ENCODE measurements at regions of chr3 and their contacts with region 1.

Region 1: GRCh38 chr3:185942907-185943759 is 5.3 kb upstream of the TRA2B start:
- DNase-seq: peak; percentile 76 to 93 (median 80)
- ATAC-seq: peak; percentile 100
- H3K4me3 ChIP-seq: peak overlapping the region; percentile 19
- H3K4me3 Mint-ChIP-seq: peak overlapping the region; percentile 52
- H3K27ac ChIP-seq: no peak overlapping the region
- H3K27ac Mint-ChIP-seq: peak overlapping the region; percentile 70
- H3K4me1 ChIP-seq: peaks cover 15% of the 10 kb centered on the region
- H3K4me1 Mint-ChIP-seq: peaks cover 23% of the 10 kb centered on the region
- H3K27me3 ChIP-seq: no peaks in the 10 kb centered on the region
- H3K27me3 Mint-ChIP-seq: no peaks in the 10 kb centered on the region
- CTCF ChIP-seq: peak; percentile 98

Region 2: DNA sequence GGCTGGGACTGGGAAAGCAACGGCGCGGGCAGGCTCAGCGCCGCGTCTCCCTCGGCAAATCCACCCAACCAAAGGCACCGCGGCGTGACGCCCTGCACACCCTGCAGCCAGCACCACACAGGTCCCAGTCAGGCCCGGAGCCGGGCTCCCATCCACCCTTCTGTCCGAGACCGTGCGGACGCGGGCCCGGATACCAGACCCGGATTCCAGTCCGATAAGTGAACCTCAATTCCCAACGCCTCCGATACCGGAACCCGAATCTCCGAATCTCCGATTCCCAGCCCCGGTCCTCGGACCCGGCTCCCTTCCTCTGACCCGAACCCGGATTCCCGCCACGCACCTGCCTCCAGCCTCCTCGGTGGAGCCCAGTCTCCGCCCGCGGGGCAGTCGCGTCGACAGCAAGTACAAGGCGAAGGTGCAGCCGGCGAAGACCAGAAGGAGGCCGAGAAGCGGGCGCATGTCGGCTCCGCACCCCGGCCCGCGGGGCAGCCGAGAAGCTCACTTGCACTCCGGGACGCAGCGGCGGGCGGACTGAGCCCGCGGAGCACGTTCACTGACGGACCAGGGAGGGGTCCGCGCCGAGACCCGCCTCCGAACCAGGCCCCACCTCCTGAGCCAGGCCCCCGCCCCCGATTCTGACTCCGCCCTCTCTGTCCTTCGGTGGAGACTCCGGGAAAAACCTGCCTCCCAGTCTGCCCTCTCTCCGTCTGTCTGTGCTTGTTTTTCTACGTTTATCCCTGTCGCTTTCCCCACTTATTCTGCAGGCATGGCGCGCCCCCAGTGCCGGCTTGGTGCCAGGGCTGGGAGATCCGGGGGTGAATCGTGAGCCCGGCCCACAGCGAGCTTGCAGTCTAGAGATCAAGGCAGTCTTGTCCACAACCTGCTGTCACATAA is 444.4 kb before region 1 on chr3 and contains the start of gene TMEM41A:
- CTCF ChIA-PET with region 1: no interaction called
- POLR2A ChIA-PET with region 1: no interaction called
- intact Hi-C with region 1: loop called in 1 of 2 experiments (anchors 5 kb)
- DNase-seq: peak; percentile 80 to 91 (median 86)
- ATAC-seq: peak; percentile 98
- H3K4me3 ChIP-seq: peak within 1 kb of the TSS; percentile 97
- H3K4me3 Mint-ChIP-seq: peak within 1 kb of the TSS; percentile 97
- H3K27ac ChIP-seq: peak within 1 kb of the TSS; percentile 24 to 69
- H3K27ac Mint-ChIP-seq: peak within 1 kb of the TSS; percentile 87
- H3K4me1 ChIP-seq: peaks cover 22% of the 10 kb centered on the region
- H3K4me1 Mint-ChIP-seq: peaks cover 24% of the 10 kb centered on the region
- H3K27me3 ChIP-seq: no peaks in the 10 kb centered on the region
- H3K27me3 Mint-ChIP-seq: no peaks in the 10 kb centered on the region
- CTCF ChIP-seq: no peak
- total RNA-seq, gene TMEM41A: 26.8 to 29.1 TPM

Region 3: DNA sequence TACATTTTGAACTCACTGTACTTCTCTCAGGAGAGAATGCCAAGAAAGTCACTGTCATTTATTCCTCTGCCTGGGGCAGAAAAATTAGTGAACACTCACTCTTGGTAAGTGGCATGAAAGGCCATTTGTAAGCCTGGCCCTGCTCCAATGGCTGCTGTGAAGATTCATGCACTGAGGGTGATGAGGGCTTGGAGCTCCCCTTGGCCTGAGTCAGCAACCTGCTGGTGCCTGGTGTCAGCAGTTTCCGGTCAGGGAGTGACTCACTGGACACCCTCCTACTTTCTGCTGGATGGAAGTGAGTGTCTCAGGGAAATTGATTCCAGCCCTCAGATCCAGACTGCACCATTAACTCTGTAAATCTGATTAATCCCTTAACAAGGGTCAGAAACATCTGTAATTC is 42.9 kb before region 1 on chr3:
- CTCF ChIA-PET with region 1: no interaction called
- POLR2A ChIA-PET with region 1: no interaction called
- intact Hi-C with region 1: no loop called
- DNase-seq: peak in 1 of 14 experiments; percentile 54
- ATAC-seq: no peak
- H3K4me3 ChIP-seq: no peak overlapping the region
- H3K4me3 Mint-ChIP-seq: no peak overlapping the region
- H3K27ac ChIP-seq: no peak overlapping the region
- H3K27ac Mint-ChIP-seq: no peak overlapping the region
- H3K4me1 ChIP-seq: no peaks in the 10 kb centered on the region
- H3K4me1 Mint-ChIP-seq: no peaks in the 10 kb centered on the region
- H3K27me3 ChIP-seq: peaks cover 0 to 2% of the 10 kb centered on the region in 2 experiments
- H3K27me3 Mint-ChIP-seq: peaks cover 5% of the 10 kb centered on the region
- CTCF ChIP-seq: no peak

Region 4: GRCh38 chr3:185924375-185924774 is 18.8 kb before region 1 on chr3:
- CTCF ChIA-PET with region 1: interaction called, 24 read pairs
- POLR2A ChIA-PET with region 1: interaction called, 116 read pairs
- intact Hi-C with region 1: loop called in 1 of 2 experiments (anchors 1 kb)
- DNase-seq: no peak
- ATAC-seq: no peak
- H3K4me3 ChIP-seq: no peak overlapping the region
- H3K4me3 Mint-ChIP-seq: no peak overlapping the region
- H3K27ac ChIP-seq: no peak overlapping the region
- H3K27ac Mint-ChIP-seq: peak overlapping the region; percentile 56
- H3K4me1 ChIP-seq: peaks cover 26% of the 10 kb centered on the region
- H3K4me1 Mint-ChIP-seq: peaks cover 63% of the 10 kb centered on the region
- H3K27me3 ChIP-seq: no peaks in the 10 kb centered on the region
- H3K27me3 Mint-ChIP-seq: no peaks in the 10 kb centered on the region
- CTCF ChIP-seq: no peak

Region 5: GRCh38 chr3:185954366-185954723 is 11.2 kb after region 1 on chr3:
- CTCF ChIA-PET with region 1: interaction called, 20 read pairs
- POLR2A ChIA-PET with region 1: interaction called, 23 read pairs
- intact Hi-C with region 1: no loop called
- DNase-seq: no peak
- ATAC-seq: no peak
- H3K4me3 ChIP-seq: no peak overlapping the region
- H3K4me3 Mint-ChIP-seq: no peak overlapping the region
- H3K27ac ChIP-seq: no peak overlapping the region
- H3K27ac Mint-ChIP-seq: no peak overlapping the region
- H3K4me1 ChIP-seq: peaks cover 4% of the 10 kb centered on the region
- H3K4me1 Mint-ChIP-seq: no peaks in the 10 kb centered on the region
- H3K27me3 ChIP-seq: no peaks in the 10 kb centered on the region
- H3K27me3 Mint-ChIP-seq: peaks cover 7% of the 10 kb centered on the region
- CTCF ChIP-seq: no peak

Region 6: DNA sequence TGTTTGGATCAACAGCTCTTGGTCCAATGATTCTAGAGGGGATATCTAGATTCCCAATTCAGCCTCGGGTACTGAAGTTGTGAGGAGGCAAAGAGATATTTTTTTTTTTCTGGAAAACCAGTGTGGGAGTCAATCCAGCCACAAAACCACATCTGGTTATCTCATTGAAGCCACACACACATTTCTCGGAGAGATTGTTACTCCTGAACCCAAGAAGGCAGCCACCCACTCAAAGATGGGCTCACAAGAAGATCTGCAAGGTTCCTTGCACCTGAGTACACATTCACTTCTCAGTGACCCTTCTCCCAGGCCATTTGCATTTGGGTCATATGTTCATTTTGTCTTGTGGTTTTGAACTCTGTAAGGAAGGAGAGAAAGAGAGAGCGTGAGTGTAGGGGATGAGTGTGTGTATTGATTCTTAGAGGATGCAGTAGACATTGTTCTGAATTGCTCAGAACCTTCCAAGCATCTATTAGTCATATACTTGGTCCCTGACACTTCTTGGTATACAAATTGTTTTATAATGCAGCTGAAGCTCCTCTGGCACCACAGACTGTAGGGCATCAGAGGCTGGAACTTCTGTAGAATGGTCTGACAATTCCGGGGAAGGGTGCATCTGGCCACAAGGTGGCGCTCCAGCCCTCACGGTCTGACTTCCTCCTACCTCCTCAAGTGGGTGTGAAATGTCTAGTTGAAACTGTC is 34.0 kb after region 1 on chr3:
- CTCF ChIA-PET with region 1: interaction called, 10 read pairs
- POLR2A ChIA-PET with region 1: no interaction called
- intact Hi-C with region 1: loop called in 1 of 2 experiments (anchors 5 kb)
- DNase-seq: peak; percentile 59 to 88 (median 76)
- ATAC-seq: peak; percentile 87
- H3K4me3 ChIP-seq: no peak overlapping the region
- H3K4me3 Mint-ChIP-seq: no peak overlapping the region
- H3K27ac ChIP-seq: no peak overlapping the region
- H3K27ac Mint-ChIP-seq: no peak overlapping the region
- H3K4me1 ChIP-seq: no peaks in the 10 kb centered on the region
- H3K4me1 Mint-ChIP-seq: peaks cover 8% of the 10 kb centered on the region
- H3K27me3 ChIP-seq: no peaks in the 10 kb centered on the region
- H3K27me3 Mint-ChIP-seq: no peaks in the 10 kb centered on the region
- CTCF ChIP-seq: peak; percentile 95

Region 7: DNA sequence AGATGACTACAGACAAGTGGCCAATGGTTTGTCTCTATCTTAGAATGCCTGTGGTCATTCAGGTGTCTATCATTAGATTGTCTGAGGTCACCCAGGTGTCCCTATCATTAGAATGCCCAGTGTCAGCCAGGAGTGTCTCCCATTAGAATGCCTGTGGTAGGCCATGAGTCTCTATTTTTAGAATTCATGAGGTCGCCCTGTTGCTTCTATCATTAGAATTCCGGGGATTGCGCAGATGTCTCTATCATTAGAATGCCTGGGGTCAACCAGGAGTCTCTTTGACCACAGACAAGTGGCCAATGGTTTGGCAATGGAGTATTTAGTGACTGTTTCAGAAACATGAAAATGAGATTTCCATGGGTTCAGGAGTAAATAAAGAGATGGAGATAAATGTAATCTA is 1751.7 kb after region 1 on chr3:
- CTCF ChIA-PET with region 1: no interaction called
- POLR2A ChIA-PET with region 1: no interaction called
- intact Hi-C with region 1: no loop called
- DNase-seq: no peak
- ATAC-seq: no peak
- H3K4me3 ChIP-seq: no peak overlapping the region
- H3K4me3 Mint-ChIP-seq: no peak overlapping the region
- H3K27ac ChIP-seq: no peak overlapping the region
- H3K27ac Mint-ChIP-seq: no peak overlapping the region
- H3K4me1 ChIP-seq: no peaks in the 10 kb centered on the region
- H3K4me1 Mint-ChIP-seq: no peaks in the 10 kb centered on the region
- H3K27me3 ChIP-seq: peaks cover 0 to 10% of the 10 kb centered on the region in 2 experiments
- H3K27me3 Mint-ChIP-seq: peaks cover 44% of the 10 kb centered on the region
- CTCF ChIP-seq: no peak